OCI-LY7 (cell line): ENCODE measurements at regions of chr19 and their contacts with region 1.

Region 1: DNA sequence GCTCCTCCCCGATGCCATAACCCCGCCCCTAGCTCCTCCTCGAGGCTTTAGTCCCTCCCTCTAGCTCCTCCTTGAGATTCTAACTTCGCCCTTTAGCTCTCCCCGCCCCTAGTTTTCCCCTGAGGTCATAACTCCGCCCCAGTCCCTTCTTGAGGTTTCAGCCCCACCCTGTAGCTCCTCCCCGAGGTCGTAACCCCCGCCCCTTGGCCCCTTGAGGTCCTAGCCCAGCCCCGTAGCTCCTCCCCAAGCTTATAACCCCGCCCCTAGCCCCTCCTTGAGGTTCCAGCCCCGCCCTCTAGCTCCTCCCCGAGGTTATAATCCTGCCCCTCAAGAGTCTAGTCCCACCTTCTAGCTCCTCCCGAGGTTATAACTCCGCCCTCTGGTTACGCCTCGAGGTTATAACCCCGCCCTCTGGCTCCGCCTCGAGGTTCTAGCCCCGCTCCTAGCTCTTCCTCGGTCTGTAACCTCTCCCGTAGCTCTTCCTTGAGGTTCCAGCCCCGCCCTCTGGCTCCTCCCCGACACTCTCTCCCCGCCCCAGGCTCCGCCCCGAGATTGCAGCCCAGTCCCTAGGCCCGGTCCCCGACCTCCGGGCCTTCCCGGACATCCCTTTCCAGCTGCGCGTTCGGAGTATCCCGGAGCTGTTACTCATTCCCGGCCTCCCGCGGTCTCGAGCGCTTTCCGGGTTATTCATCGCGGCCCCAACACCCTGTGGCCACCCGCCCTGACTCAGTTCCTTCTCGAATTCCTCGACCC is 1.4 kb downstream of the PLAUR start:
- DNase-seq: peak; percentile 97
- H3K4me3 ChIP-seq: peak overlapping the region; percentile 35
- H3K27ac ChIP-seq: no peak overlapping the region
- H3K4me1 ChIP-seq: peaks cover 7% of the 10 kb centered on the region
- CTCF ChIP-seq: no peak

Region 2: GRCh38 chr19:43430142-43430710 is 238.4 kb before region 1 on chr19:
- CTCF ChIA-PET with region 1: no interaction called
- POLR2A ChIA-PET with region 1: no interaction called
- intact Hi-C with region 1: no loop called
- DNase-seq: no peak
- H3K4me3 ChIP-seq: no peak overlapping the region
- H3K27ac ChIP-seq: no peak overlapping the region
- H3K4me1 ChIP-seq: no peaks in the 10 kb centered on the region
- CTCF ChIP-seq: 0 out of 2 replicates have a peak, but pooled peaks have one; percentile 31

Region 3: GRCh38 chr19:43723588-43723987 is 55.0 kb after region 1 on chr19:
- CTCF ChIA-PET with region 1: no interaction called
- POLR2A ChIA-PET with region 1: no interaction called
- intact Hi-C with region 1: loop called (anchors 10 kb)
- DNase-seq: no peak
- H3K4me3 ChIP-seq: no peak overlapping the region
- H3K27ac ChIP-seq: no peak overlapping the region
- H3K4me1 ChIP-seq: peaks cover 15% of the 10 kb centered on the region
- CTCF ChIP-seq: peak; percentile 47